ENCODE measurements at regions of chr3 and their contacts with region 1.

Region 1: DNA sequence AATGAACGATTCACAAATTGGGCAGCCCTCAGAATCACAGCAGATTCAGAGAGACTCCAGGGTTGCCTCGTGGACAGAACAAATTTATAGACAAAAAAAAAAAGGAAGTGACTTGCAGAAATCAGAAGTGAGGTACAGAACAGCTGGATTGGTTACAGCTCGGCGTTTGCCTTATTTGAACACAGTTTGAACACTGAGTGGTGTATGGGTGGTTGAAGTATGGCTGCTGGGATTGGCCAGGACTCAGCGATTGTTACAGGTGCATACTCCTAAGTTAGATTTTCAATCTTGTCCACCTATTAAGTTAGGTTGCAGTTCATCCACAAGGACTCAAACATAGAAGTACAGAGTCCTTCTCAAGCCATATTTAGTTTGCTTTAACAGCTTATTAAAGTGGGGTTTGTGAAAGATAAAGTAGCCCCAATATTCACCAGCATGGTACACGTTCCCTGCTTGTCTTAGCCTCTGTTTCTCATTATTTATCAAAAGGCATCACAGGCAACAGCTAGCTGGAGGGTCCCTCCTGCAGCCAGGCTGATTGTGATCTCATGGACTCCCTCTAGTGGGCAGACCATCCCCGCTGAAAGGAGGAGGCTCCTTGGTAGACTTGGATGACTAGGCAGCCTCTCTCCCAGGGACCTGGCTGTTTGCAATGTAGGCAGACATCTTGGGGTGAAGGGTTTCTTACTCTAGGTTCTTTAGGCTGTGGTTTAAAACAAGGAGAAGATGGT is 17.6 kb upstream of the ALDH1L1 start:
- DNase-seq: peak; percentile 66
- H3K4me3 ChIP-seq: no peak overlapping the region
- H3K27ac ChIP-seq: no peak overlapping the region
- H3K4me1 ChIP-seq: peaks cover 5% of the 10 kb centered on the region
- H3K27me3 ChIP-seq: peaks cover 0 to 2% of the 10 kb centered on the region in 2 experiments
- CTCF ChIP-seq: peak; percentile 72 to 86
- POLR2A ChIP-seq: no peak

Region 2: DNA sequence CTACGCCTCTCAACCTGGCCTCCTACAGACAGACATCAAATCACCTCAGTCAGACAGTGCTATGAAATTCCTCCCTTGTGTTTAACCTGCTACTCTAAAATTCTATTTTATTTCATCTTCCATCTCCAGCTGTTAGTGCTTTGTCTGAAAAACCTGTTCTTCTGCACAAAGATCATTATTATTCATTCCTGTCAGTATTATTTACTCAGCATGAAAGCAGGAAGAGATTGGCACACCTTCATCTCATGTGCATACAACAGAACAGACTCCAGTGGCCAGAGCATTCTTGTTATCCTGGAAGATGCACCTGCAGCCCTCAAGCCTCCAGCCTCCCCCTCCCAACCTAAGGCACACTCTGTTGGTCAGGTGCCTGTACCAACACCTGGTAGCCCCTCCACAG is 230.9 kb before region 1 on chr3:
- CTCF ChIA-PET with region 1: interaction called, 23 read pairs
- POLR2A ChIA-PET with region 1: no interaction called
- dilution Hi-C with region 1: no loop called
- intact Hi-C with region 1: loop called (anchors 5 kb)
- DNase-seq: no peak
- H3K4me3 ChIP-seq: no peak overlapping the region
- H3K27ac ChIP-seq: no peak overlapping the region
- H3K4me1 ChIP-seq: no peaks in the 10 kb centered on the region
- H3K27me3 ChIP-seq: peaks cover 23 to 34% of the 10 kb centered on the region in 2 experiments
- CTCF ChIP-seq: no peak
- POLR2A ChIP-seq: no peak

Region 3: GRCh38 chr3:126014252-126014651 is 183.8 kb before region 1 on chr3:
- CTCF ChIA-PET with region 1: no interaction called
- POLR2A ChIA-PET with region 1: no interaction called
- dilution Hi-C with region 1: no loop called
- intact Hi-C with region 1: no loop called
- DNase-seq: no peak
- H3K4me3 ChIP-seq: no peak overlapping the region
- H3K27ac ChIP-seq: no peak overlapping the region
- H3K4me1 ChIP-seq: no peaks in the 10 kb centered on the region
- H3K27me3 ChIP-seq: no peaks in the 10 kb centered on the region
- CTCF ChIP-seq: no peak
- POLR2A ChIP-seq: no peak

Region 4: DNA sequence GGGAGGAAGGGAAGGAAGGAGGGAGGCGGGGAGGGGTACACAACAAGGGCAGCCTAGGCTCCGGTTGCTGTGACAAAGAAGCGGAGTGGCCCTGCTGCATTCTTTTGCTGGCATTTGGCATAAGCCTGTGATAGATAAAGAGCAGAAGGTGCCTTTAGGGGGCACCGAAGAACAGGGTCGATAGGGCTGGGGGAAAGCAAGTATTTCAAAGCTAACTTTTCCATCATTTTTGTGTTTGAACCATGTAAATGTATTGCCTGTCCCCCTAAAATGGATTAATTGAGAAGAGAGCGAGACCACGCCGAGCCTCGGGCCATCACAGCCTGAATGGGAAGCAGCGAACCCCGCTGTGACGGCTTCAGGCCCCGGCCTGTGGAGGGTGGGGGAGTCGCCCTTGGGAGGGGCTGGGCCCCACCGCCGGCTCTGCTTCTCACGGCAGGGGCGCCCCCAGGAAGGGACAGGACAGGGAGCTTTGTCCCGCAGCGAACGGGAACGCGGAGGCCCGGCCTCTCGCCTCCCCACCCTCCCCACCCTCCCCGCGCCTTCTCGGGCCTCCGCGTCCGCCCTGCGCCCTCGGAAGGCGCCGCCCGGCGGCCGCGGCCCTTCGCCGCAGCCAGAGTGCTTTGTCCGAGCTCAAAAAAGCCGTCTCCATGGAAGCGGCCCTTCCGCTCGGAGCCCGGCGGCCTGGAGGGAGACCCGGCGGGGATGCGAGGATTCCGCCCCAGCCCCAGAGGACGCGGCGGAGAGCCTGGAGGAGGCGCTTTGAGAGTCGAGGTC is 14.8 kb after region 1 on chr3:
- CTCF ChIA-PET with region 1: interaction called, 55 read pairs
- POLR2A ChIA-PET with region 1: no interaction called
- dilution Hi-C with region 1: no loop called
- intact Hi-C with region 1: loop called (anchors 1 kb)
- DNase-seq: peak; percentile 47
- H3K4me3 ChIP-seq: peak overlapping the region in 2 of 3 experiments; percentile 31 to 34
- H3K27ac ChIP-seq: no peak overlapping the region
- H3K4me1 ChIP-seq: peaks cover 11% of the 10 kb centered on the region
- H3K27me3 ChIP-seq: peaks cover 24 to 29% of the 10 kb centered on the region in 2 experiments
- CTCF ChIP-seq: peak; percentile 29 to 61
- POLR2A ChIP-seq: no peak

Region 5: DNA sequence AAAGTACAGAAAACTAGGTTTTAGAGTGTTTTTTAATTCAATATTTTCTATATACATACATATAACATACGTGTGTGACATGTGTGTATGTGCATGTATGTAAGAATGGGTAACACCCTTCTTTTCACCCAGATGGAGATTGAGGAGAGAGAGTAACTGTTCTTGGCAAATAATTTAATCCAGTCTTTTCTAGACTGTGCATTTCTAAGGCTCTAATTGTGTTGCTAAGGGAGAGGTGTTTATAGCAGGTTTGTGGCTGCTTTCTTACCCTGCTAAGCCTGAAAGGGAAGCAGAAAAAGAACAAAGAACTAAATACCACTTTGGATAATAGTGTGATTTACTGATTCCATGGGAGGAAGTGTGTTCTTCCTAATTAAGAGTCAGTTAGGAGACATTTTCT is 28.4 kb after region 1 on chr3:
- CTCF ChIA-PET with region 1: interaction called, 14 read pairs
- POLR2A ChIA-PET with region 1: no interaction called
- dilution Hi-C with region 1: no loop called
- intact Hi-C with region 1: no loop called
- DNase-seq: no peak
- H3K4me3 ChIP-seq: no peak overlapping the region
- H3K27ac ChIP-seq: no peak overlapping the region
- H3K4me1 ChIP-seq: no peaks in the 10 kb centered on the region
- H3K27me3 ChIP-seq: peaks cover 0 to 16% of the 10 kb centered on the region in 2 experiments
- CTCF ChIP-seq: no peak
- POLR2A ChIP-seq: no peak

Region 6: GRCh38 chr3:126389112-126389793 is 191.2 kb after region 1 on chr3:
- CTCF ChIA-PET with region 1: interaction called, 4 read pairs
- POLR2A ChIA-PET with region 1: no interaction called
- dilution Hi-C with region 1: no loop called
- intact Hi-C with region 1: loop called (anchors 1 kb)
- DNase-seq: peak; percentile 84
- H3K4me3 ChIP-seq: peak overlapping the region in 1 of 3 experiments; percentile 16
- H3K27ac ChIP-seq: no peak overlapping the region
- H3K4me1 ChIP-seq: no peaks in the 10 kb centered on the region
- H3K27me3 ChIP-seq: peaks cover 13 to 18% of the 10 kb centered on the region in 2 experiments
- CTCF ChIP-seq: peak; percentile 94 to 96
- POLR2A ChIP-seq: no peak

Measured in endothelial cell of umbilical vein (primary cell).